ENCODE measurements at regions of chr12 and their contacts with region 1.

Region 1: DNA sequence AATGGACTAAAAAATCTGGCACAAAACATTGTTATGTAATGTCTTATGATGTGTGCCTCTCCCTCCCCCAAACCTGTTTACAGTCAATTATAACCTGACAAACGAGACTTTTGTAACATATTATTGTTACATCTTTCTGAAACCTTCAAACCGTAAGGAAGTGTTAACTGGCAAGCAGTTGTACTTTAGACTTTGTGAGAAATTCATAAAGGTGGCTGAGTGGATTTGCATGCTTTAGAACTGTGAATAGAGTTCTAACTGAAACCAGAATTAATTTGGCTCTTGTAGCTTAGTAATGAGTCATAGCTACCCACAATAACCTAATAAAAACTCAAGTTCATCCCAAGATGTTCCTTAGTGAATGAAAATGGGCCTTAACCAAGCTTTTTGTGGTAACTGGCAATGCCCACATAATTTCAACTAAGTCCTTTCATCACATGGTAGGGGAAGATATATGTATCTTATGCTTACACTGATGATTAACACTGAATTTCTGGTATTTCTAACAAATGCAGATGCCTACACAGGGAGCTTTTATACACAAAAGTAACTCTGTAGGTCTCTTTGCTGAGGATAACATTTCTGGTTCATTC is 29.7 kb downstream of the RAD9B start:
- DNase-seq: no peak
- ATAC-seq: no peak
- H3K4me3 ChIP-seq: no peak overlapping the region
- H3K27ac ChIP-seq: no peak overlapping the region
- H3K4me1 ChIP-seq: peaks cover 15% of the 10 kb centered on the region
- CTCF ChIP-seq: no peak
- EP300 ChIP-seq: no peak
- POLR2A ChIP-seq: no peak
- RAD21 ChIP-seq: no peak

Region 2: DNA sequence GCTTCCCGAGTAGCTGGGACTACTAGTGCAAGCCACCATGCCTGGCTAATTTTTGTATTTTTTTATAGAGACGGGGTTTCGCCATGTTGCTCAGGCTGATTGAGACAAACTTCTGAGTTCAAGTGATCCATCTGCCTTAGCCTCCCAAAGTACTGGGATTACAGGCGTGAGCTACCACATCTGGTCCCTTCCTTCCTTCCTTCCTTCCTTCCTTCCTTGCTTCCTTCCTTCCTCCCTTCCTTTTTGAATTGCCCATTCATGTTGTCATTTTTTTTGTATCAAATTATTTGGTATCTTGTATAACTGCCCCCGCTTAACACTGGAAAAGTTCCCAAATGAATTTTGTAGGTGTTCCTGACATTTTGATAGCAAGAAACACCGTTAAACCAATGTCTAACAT is 18.0 kb before region 1 on chr12:
- CTCF ChIA-PET with region 1: interaction called, 14 read pairs
- POLR2A ChIA-PET with region 1: no interaction called
- DNase-seq: no peak
- ATAC-seq: no peak
- H3K4me3 ChIP-seq: no peak overlapping the region
- H3K27ac ChIP-seq: no peak overlapping the region
- H3K4me1 ChIP-seq: no peaks in the 10 kb centered on the region
- CTCF ChIP-seq: no peak
- EP300 ChIP-seq: no peak
- POLR2A ChIP-seq: no peak
- RAD21 ChIP-seq: no peak